IMR-90 (cell line): ENCODE measurements at regions of chr11 and their contacts with region 1.

Region 1: GRCh38 chr11:18634140-18635032 is at the start of gene SPTY2D1:
- DNase-seq: peak; percentile 99
- ATAC-seq: peak; percentile 97
- H3K4me3 ChIP-seq: peak within 1 kb of the TSS; percentile 60
- H3K27ac ChIP-seq: peak within 1 kb of the TSS; percentile 90
- H3K4me1 ChIP-seq: no peaks in the 10 kb centered on the region
- H3K27me3 ChIP-seq: no peaks in the 10 kb centered on the region
- CTCF ChIP-seq: no peak
- POLR2A ChIP-seq: peak; percentile 98
- RAD21 ChIP-seq: 0 out of 2 replicates have a peak, but pooled peaks have one; percentile 4
- total RNA-seq, gene SPTY2D1: 35.8 and 36.6 TPM in 2 replicates

Region 2: GRCh38 chr11:18588297-18589252 is 45.8 kb before region 1 on chr11 and contains the start of gene UEVLD:
- CTCF ChIA-PET with region 1: no interaction called
- POLR2A ChIA-PET with region 1: interaction called, 3 read pairs
- dilution Hi-C with region 1: no loop called
- in situ Hi-C with region 1: no loop called
- intact Hi-C with region 1: loop called (anchors 1 kb)
- DNase-seq: peak; percentile 89
- ATAC-seq: peak; percentile 96
- H3K4me3 ChIP-seq: peak within 1 kb of the TSS; percentile 82
- H3K27ac ChIP-seq: peak within 1 kb of the TSS; percentile 85
- H3K4me1 ChIP-seq: peaks cover 5% of the 10 kb centered on the region; the same call in 1 of the 2 replicates
- H3K27me3 ChIP-seq: no peaks in the 10 kb centered on the region
- CTCF ChIP-seq: no peak
- POLR2A ChIP-seq: peak; percentile 71
- RAD21 ChIP-seq: no peak
- total RNA-seq, gene UEVLD: 29.2 and 35.3 TPM in 2 replicates

Region 3: DNA sequence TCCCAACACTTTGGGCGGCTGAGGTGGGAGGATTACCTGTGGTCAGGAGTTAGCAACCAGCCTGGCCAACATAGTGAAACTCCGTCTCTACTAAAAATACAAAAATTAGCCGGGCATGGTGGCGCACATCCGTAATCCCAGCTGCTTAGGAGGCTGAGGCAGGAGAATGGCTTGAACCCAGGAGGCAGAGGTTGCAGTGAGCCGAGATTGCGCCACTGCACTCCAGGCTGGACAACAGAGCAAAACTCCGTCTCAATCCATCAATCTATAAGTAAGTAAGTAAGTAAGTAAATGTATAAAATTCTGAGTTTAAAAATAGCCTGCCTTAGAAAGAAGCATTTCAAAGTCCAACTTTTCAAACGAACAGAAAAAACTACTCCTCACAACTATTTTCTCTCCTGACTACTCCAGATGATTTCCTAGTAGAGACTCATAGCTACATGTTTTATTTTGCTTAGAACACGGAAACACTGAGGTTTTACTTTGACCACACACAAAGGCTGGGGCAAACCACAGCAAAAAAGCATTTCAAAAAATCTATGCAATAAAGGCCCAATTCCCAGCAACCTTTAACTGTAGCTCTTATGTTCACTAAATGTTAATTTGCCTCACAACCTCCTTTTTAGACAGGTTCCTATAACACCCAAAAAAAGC is 16.6 kb before region 1 on chr11:
- CTCF ChIA-PET with region 1: interaction called, 4 read pairs
- POLR2A ChIA-PET with region 1: interaction called, 4 read pairs
- dilution Hi-C with region 1: no loop called
- in situ Hi-C with region 1: no loop called
- intact Hi-C with region 1: loop called (anchors 2 kb)
- DNase-seq: peak; percentile 71
- ATAC-seq: peak; percentile 72
- H3K4me3 ChIP-seq: peak overlapping the region; percentile 5; the same call in 1 of the 2 replicates
- H3K27ac ChIP-seq: peak overlapping the region; percentile 55; the same call in 1 of the 2 replicates
- H3K4me1 ChIP-seq: peaks cover 7% of the 10 kb centered on the region
- H3K27me3 ChIP-seq: no peaks in the 10 kb centered on the region
- CTCF ChIP-seq: no peak
- POLR2A ChIP-seq: no peak
- RAD21 ChIP-seq: no peak